RWPE1 (cell line): ENCODE measurements at regions of chr1 and their contacts with region 1.

Region 1: DNA sequence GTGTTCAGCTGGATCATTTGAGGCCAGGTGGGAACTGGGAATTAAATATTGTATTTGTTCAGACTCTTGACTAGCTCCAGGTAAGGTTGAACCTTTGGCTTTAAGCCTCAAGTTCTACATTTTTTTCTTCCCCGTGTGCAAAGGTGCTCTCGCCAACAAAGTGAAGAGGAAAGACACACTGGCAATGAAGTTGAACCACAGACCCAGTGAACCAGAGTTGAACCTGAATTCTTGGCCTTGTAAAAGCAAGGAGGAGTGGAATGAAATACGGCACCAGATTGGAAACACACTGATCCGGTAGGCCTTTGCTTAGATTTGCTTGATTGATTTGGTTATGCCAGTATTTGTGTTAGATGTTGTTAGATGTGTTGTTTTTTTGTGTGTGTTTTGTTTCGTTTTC is 25.5 kb upstream of the RCC1 start:
- DNase-seq: no peak
- H3K27ac ChIP-seq: no peak overlapping the region
- CTCF ChIP-seq: no peak

Region 2: DNA sequence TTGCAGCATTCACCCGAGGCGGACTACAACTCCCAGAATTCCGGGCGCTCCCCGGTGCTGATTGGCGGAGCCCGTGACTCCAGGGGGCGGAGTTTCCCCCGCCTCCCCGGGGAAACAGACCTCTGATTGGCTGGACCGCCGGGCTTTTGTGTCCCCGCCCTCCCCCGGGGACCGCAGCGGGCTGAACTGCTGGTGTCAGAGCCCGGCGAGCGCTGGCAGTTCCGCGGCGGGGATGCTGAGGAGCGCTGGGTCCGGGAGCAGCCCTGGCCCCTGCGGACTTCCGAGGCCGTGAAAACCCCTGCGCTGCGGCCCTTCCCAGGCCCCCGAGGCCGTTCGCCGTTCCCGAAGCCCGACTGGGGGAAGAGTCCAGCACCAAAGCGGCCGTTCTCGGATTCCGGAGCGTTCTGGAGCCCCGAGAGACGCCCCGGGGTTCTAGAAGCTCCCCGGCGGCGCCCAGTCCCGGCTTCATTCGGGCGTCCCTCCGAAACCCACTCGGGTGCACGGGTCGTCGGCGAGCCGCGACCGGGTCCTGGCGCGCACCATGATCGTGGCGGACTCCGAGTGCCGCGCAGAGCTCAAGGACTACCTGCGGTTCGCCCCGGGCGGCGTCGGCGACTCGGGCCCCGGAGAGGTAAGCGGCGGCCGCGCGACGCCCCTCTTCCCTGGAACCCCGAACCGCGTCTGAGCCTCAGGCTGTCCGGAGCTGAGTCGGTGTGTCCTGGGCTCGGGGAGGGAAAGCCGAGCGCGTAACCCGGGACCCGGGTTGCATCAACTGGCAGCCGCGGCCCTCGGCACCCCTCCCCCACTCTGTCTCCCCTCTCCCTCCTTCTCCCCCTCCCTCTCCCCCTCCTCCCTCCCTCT is 220.8 kb before region 1 on chr1 and contains the start of gene SESN2:
- CTCF ChIA-PET with region 1: no interaction called
- POLR2A ChIA-PET with region 1: no interaction called
- DNase-seq: peak; percentile 99
- H3K27ac ChIP-seq: peak within 1 kb of the TSS; percentile 93
- CTCF ChIP-seq: no peak

Region 3: DNA sequence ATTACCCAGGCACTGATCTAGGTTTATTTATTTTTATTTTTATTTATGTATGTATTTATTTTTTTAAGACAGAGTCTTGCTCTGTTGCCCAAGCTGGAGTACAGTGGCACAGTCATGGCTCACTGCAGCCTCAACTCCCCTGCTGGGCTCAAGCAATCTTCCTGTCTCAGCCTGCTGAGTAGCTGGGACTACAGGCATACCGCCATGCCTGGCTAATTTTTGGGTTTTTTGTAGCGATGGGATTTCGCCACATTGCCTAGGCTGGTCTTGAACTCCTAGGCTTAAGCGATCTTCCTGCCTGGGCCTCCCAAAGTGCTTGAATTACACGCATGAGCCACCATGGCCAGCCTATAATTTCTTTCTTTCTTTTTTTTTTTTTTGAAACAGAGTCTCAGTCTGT is 101.4 kb before region 1 on chr1:
- CTCF ChIA-PET with region 1: no interaction called
- POLR2A ChIA-PET with region 1: no interaction called
- DNase-seq: no peak
- H3K27ac ChIP-seq: no peak overlapping the region; the same call in 1 of the 2 replicates
- CTCF ChIP-seq: no peak

Region 4: GRCh38 chr1:28447679-28448078 is 32.6 kb before region 1 on chr1:
- CTCF ChIA-PET with region 1: no interaction called
- POLR2A ChIA-PET with region 1: no interaction called
- DNase-seq: no peak
- H3K27ac ChIP-seq: no peak overlapping the region
- CTCF ChIP-seq: no peak

Region 5: GRCh38 chr1:28505406-28506187 is 25.3 kb after region 1 on chr1 and contains the start of gene RCC1:
- CTCF ChIA-PET with region 1: no interaction called
- POLR2A ChIA-PET with region 1: interaction called, 10 read pairs
- DNase-seq: peak; percentile 99
- H3K27ac ChIP-seq: peak within 1 kb of the TSS; percentile 97
- CTCF ChIP-seq: no peak